IMR-90 (cell line): ENCODE measurements at regions of chr9 and their contacts with region 1.

Region 1: GRCh38 chr9:37220971-37221370 is 100.6 kb downstream of the ZCCHC7 start:
- DNase-seq: peak; percentile 46
- ATAC-seq: peak; percentile 56
- H3K4me3 ChIP-seq: no peak overlapping the region
- H3K27ac ChIP-seq: no peak overlapping the region
- H3K4me1 ChIP-seq: no peaks in the 10 kb centered on the region
- H3K27me3 ChIP-seq: no peaks in the 10 kb centered on the region
- CTCF ChIP-seq: no peak
- POLR2A ChIP-seq: no peak
- RAD21 ChIP-seq: no peak

Region 2: GRCh38 chr9:37149666-37150308 is 71.2 kb before region 1 on chr9:
- CTCF ChIA-PET with region 1: no interaction called
- POLR2A ChIA-PET with region 1: no interaction called
- dilution Hi-C with region 1: no loop called
- in situ Hi-C with region 1: no loop called
- intact Hi-C with region 1: loop called (anchors 5 kb)
- DNase-seq: no peak
- ATAC-seq: no peak
- H3K4me3 ChIP-seq: no peak overlapping the region
- H3K27ac ChIP-seq: no peak overlapping the region
- H3K4me1 ChIP-seq: no peaks in the 10 kb centered on the region
- H3K27me3 ChIP-seq: no peaks in the 10 kb centered on the region
- CTCF ChIP-seq: no peak
- POLR2A ChIP-seq: no peak
- RAD21 ChIP-seq: no peak